ENCODE measurements at regions of chr4 and their contacts with region 1.

Region 1: GRCh38 chr4:185640811-185641675 is 105.7 kb upstream of the PDLIM3 start:
- DNase-seq: peak; percentile 68
- H3K4me3 Mint-ChIP-seq: no peak overlapping the region
- H3K27ac Mint-ChIP-seq: no peak overlapping the region
- H3K4me1 Mint-ChIP-seq: no peaks in the 10 kb centered on the region
- H3K27me3 Mint-ChIP-seq: no peaks in the 10 kb centered on the region
- CTCF ChIP-seq: peak; percentile 33

Region 2: GRCh38 chr4:185730387-185730786 is 89.3 kb after region 1 on chr4:
- CTCF ChIA-PET with region 1: interaction called, 5 read pairs
- POLR2A ChIA-PET with region 1: no interaction called
- intact Hi-C with region 1: loop called (anchors 10 kb)
- DNase-seq: peak; percentile 76
- H3K4me3 Mint-ChIP-seq: peak overlapping the region; percentile 35
- H3K27ac Mint-ChIP-seq: peak overlapping the region; percentile 85
- H3K4me1 Mint-ChIP-seq: peaks cover 30% of the 10 kb centered on the region
- H3K27me3 Mint-ChIP-seq: no peaks in the 10 kb centered on the region
- CTCF ChIP-seq: no peak

Region 3: GRCh38 chr4:185774845-185775680 is 134.0 kb after region 1 on chr4:
- CTCF ChIA-PET with region 1: interaction called, 3 read pairs
- POLR2A ChIA-PET with region 1: interaction called, 5 read pairs
- intact Hi-C with region 1: loop called (anchors 1 kb)
- DNase-seq: peak; percentile 70
- H3K4me3 Mint-ChIP-seq: peak overlapping the region; percentile 60
- H3K27ac Mint-ChIP-seq: peak overlapping the region; percentile 92
- H3K4me1 Mint-ChIP-seq: peaks cover 41% of the 10 kb centered on the region
- H3K27me3 Mint-ChIP-seq: no peaks in the 10 kb centered on the region
- CTCF ChIP-seq: no peak

Region 4: GRCh38 chr4:186021461-186022167 is 380.6 kb after region 1 on chr4:
- CTCF ChIA-PET with region 1: interaction called, 51 read pairs
- POLR2A ChIA-PET with region 1: interaction called, 3 read pairs
- intact Hi-C with region 1: loop called (anchors 1 kb)
- DNase-seq: peak; percentile 31
- H3K4me3 Mint-ChIP-seq: no peak overlapping the region
- H3K27ac Mint-ChIP-seq: no peak overlapping the region
- H3K4me1 Mint-ChIP-seq: no peaks in the 10 kb centered on the region
- H3K27me3 Mint-ChIP-seq: no peaks in the 10 kb centered on the region
- CTCF ChIP-seq: peak; percentile 55

Region 5: DNA sequence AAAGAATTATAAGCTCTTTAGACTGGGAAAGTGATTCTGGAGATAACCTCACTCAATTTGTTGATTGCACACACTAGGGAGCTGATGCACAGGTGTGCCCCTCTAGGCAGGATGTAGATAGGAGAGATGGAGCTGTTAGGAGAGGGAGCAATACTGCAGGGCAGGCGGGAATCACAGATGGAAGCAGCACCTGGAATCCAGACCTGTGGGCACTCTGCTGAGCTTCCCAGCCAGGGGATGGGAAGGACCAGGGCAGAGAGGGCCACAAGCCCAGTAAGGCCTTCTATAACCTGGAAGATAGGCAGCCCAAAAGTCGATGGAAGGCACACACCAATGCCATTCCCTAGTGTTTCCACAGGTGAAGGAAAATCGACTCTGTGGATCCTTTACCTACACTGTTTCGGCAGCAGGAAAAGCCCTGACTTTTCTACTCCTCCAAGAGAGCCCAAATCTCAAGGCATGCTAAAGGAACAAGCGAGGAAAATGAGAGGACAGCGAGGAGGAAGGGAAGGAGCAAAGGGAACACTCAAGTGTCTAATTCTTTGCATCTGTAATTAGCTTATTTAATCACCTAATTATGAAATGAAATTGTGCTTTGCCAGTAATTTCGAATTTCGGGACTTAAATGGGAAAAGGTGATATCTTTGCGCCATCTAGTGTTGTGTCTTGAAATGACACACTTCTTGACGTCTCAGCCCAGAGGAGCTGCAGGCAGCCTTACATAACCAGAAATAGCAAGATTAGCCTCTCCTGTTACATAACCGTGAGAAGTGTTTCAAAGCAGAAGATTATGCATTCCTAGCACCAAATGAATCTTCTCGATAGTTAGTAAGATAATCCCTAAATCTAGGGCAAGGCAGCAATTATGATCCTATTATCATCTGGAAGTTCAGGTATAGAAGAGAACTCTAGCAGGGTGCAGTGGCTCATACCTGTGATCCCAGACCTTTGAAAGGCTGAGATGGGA is 396.9 kb after region 1 on chr4:
- CTCF ChIA-PET with region 1: interaction called, 149 read pairs
- POLR2A ChIA-PET with region 1: interaction called, 8 read pairs
- intact Hi-C with region 1: loop called (anchors 1 kb)
- DNase-seq: peak; percentile 79
- H3K4me3 Mint-ChIP-seq: no peak overlapping the region
- H3K27ac Mint-ChIP-seq: no peak overlapping the region
- H3K4me1 Mint-ChIP-seq: no peaks in the 10 kb centered on the region
- H3K27me3 Mint-ChIP-seq: no peaks in the 10 kb centered on the region
- CTCF ChIP-seq: peak; percentile 75

Region 6: DNA sequence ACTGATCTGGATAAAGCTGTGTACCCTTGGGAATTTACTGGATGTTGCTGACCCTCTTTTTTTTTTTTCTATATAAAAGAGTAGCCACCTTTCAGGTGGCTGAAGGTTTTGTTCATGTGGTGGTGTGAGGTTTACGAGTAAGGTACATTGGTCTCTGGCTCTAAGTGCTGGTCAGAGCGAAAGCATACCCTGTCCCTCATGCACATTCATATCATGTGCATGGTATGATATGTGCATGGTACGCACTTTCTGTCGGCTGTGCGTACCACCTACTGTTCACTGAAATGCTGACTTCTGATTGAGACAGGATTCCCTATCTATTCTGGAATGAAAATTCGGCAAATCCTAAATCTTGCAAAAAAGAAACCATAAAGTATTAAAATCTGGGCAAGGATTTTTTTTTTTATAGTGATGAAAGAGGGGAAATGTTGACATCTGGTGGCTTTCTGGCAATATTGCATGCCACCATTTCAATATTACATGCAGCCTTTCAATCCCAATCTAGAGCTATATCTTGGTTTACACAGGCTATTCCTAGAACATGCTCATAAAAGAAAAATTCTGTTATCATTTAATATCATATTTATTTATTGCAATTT is 496.3 kb after region 1 on chr4:
- CTCF ChIA-PET with region 1: interaction called, 5 read pairs
- POLR2A ChIA-PET with region 1: no interaction called
- intact Hi-C with region 1: loop called (anchors 1 kb)
- DNase-seq: peak; percentile 34
- H3K4me3 Mint-ChIP-seq: no peak overlapping the region
- H3K27ac Mint-ChIP-seq: no peak overlapping the region
- H3K4me1 Mint-ChIP-seq: no peaks in the 10 kb centered on the region
- H3K27me3 Mint-ChIP-seq: no peaks in the 10 kb centered on the region
- CTCF ChIP-seq: peak; percentile 60